Caco-2 (cell line): ENCODE measurements at regions of chrX and their contacts with region 1.

Region 1: GRCh38 chrX:43564953-43565352 is 91.1 kb upstream of the MAOA start:
- DNase-seq: peak; percentile 5 to 34
- H3K4me3 ChIP-seq: no peak overlapping the region
- H3K4me3 Mint-ChIP-seq: no peak overlapping the region
- H3K27ac Mint-ChIP-seq: peak overlapping the region; percentile 48
- H3K4me1 ChIP-seq: 0 out of 2 replicates have a peak, but pooled peaks cover 3% of the 10 kb centered on the region
- H3K4me1 Mint-ChIP-seq: peaks cover 14% of the 10 kb centered on the region
- H3K27me3 ChIP-seq: no peaks in the 10 kb centered on the region
- H3K27me3 Mint-ChIP-seq: no peaks in the 10 kb centered on the region
- CTCF ChIP-seq: no peak

Region 2: DNA sequence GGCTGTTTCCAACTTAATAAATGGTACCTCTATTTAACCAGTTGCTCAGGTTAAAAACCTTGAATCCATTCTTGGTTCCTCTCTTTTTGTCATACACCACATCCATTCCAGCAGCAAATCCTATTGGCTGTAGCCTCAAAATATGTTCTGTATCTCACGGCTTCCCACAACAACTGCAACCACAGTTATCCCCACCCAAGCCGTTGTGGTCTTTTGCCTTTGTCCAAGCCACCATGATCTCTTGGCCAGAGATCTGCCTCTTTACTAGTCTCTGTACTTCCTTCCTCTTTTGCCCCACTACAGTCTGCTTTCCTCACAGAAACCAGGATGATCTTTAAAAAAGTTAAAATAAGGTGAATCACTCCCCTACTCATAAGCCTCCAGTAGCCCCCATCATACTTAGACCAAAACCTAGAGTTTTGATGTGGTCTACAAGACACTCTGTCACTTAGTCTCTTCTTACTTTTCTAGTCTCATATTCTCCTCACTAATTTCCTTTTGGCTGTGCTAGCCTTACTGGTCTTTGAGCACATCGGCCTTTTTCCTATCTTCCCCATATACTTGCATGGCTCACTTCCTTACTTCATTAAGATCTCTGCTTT is 101.5 kb after region 1 on chrX:
- CTCF ChIA-PET with region 1: no interaction called
- POLR2A ChIA-PET with region 1: no interaction called
- intact Hi-C with region 1: no loop called
- DNase-seq: no peak
- H3K4me3 ChIP-seq: no peak overlapping the region
- H3K4me3 Mint-ChIP-seq: no peak overlapping the region
- H3K27ac Mint-ChIP-seq: no peak overlapping the region
- H3K4me1 ChIP-seq: no peaks in the 10 kb centered on the region
- H3K4me1 Mint-ChIP-seq: no peaks in the 10 kb centered on the region
- H3K27me3 ChIP-seq: no peaks in the 10 kb centered on the region
- H3K27me3 Mint-ChIP-seq: no peaks in the 10 kb centered on the region
- CTCF ChIP-seq: no peak

Region 3: DNA sequence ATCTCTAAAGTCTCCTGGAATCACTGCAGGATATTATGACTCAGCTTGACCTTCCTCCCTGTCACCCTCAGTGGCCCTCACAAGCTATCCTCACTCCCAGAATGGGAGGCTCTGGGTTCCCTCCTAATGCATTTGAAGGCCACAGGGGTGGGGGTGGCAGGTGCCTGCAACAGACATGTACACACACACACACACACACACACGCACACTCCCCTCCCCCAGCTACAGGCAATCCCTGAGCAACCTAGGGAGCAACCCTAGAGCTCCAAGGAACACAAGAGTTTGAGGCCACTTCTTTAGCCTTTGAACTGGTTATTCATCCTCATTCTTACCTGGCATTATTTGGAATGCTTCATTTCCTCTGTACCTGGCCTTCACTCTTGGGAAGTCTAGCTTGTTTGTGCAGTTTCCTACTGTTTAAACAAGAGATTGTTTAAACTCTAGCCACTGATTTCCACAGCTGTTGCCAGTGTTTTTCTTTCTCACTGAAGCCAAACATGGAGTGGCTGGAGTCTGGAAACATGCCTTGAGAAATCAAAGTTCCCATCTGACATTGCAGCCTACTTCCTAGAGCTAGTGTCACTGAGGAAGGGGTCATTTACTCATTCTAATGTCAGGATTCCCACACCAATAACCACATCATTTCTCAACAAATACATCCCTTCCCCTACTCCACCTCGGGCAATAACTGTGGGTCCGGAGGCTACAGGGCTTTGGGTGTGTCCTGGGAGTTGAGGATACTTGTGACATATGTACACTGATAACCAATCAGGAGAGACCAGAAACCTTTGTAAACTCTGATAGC is 128.9 kb after region 1 on chrX:
- CTCF ChIA-PET with region 1: no interaction called
- POLR2A ChIA-PET with region 1: no interaction called
- intact Hi-C with region 1: loop called (anchors 1 kb)
- DNase-seq: peak; percentile 55 to 66
- H3K4me3 ChIP-seq: no peak overlapping the region
- H3K4me3 Mint-ChIP-seq: peak overlapping the region; percentile 44
- H3K27ac Mint-ChIP-seq: peak overlapping the region; percentile 66
- H3K4me1 ChIP-seq: peaks cover 25% of the 10 kb centered on the region
- H3K4me1 Mint-ChIP-seq: no peaks in the 10 kb centered on the region
- H3K27me3 ChIP-seq: no peaks in the 10 kb centered on the region
- H3K27me3 Mint-ChIP-seq: no peaks in the 10 kb centered on the region
- CTCF ChIP-seq: no peak

Region 4: DNA sequence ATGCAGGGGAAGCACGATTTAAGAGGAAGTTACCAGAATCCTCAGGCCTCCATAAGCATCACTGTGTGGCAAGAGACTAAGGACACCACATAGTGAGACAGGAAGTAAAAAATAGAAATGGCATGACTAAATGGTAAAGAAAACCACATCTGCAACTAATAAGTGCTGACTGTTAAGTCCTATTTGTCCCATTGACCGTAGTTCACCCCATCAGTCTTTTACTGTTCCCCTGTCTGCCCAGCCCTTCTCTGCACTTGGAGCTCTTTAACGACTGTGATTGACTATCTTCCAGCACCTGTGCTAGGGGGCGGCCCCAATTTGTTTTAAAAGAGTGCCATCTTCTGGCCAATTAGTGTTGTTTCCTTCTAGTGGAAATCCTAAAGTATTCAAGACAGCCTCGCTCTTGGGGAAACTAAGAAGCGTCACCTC is 185.3 kb after region 1 on chrX:
- CTCF ChIA-PET with region 1: interaction called, 22 read pairs
- POLR2A ChIA-PET with region 1: no interaction called
- intact Hi-C with region 1: loop called (anchors 1 kb)
- DNase-seq: peak; percentile 45 to 46
- H3K4me3 ChIP-seq: no peak overlapping the region
- H3K4me3 Mint-ChIP-seq: no peak overlapping the region
- H3K27ac Mint-ChIP-seq: no peak overlapping the region
- H3K4me1 ChIP-seq: no peaks in the 10 kb centered on the region
- H3K4me1 Mint-ChIP-seq: no peaks in the 10 kb centered on the region
- H3K27me3 ChIP-seq: no peaks in the 10 kb centered on the region
- H3K27me3 Mint-ChIP-seq: no peaks in the 10 kb centered on the region
- CTCF ChIP-seq: peak; percentile 26 to 53